Mammary epithelial cell (primary cell): ENCODE measurements at regions of chr20 and their contacts with region 1.

Region 1: GRCh38 chr20:4592316-4593148 is 129.2 kb upstream of the PRND start:
- DNase-seq: peak; percentile 22
- H3K4me3 ChIP-seq: peak overlapping the region in 2 of 3 experiments; percentile 26 to 27
- H3K27ac ChIP-seq: no peak overlapping the region
- H3K4me1 ChIP-seq: peaks cover 7% of the 10 kb centered on the region
- H3K27me3 ChIP-seq: no peaks in the 10 kb centered on the region
- CTCF ChIP-seq: peak; percentile 82 to 83

Region 2: GRCh38 chr20:4108495-4109306 is 483.8 kb before region 1 on chr20:
- CTCF ChIA-PET with region 1: no interaction called
- dilution Hi-C with region 1: no loop called
- in situ Hi-C with region 1: loop called in 1 of 2 experiments (anchors 10 kb)
- intact Hi-C with region 1: loop called (anchors 1 kb)
- DNase-seq: peak; percentile 60
- H3K4me3 ChIP-seq: no peak overlapping the region
- H3K27ac ChIP-seq: no peak overlapping the region
- H3K4me1 ChIP-seq: peaks cover 9% of the 10 kb centered on the region
- H3K27me3 ChIP-seq: no peaks in the 10 kb centered on the region
- CTCF ChIP-seq: peak; percentile 99 to 100

Region 3: GRCh38 chr20:4252005-4252404 is 340.5 kb before region 1 on chr20:
- CTCF ChIA-PET with region 1: no interaction called
- dilution Hi-C with region 1: no loop called
- in situ Hi-C with region 1: loop called in 1 of 2 experiments (anchors 5 kb)
- intact Hi-C with region 1: no loop called
- DNase-seq: no peak
- H3K4me3 ChIP-seq: no peak overlapping the region
- H3K27ac ChIP-seq: no peak overlapping the region
- H3K4me1 ChIP-seq: peaks cover 3% of the 10 kb centered on the region
- H3K27me3 ChIP-seq: no peaks in the 10 kb centered on the region
- CTCF ChIP-seq: no peak

Region 4: GRCh38 chr20:4435225-4435624 is 157.3 kb before region 1 on chr20:
- CTCF ChIA-PET with region 1: no interaction called
- dilution Hi-C with region 1: no loop called
- in situ Hi-C with region 1: no loop called
- intact Hi-C with region 1: no loop called
- DNase-seq: no peak
- H3K4me3 ChIP-seq: no peak overlapping the region
- H3K27ac ChIP-seq: no peak overlapping the region
- H3K4me1 ChIP-seq: peaks cover 15% of the 10 kb centered on the region
- H3K27me3 ChIP-seq: no peaks in the 10 kb centered on the region
- CTCF ChIP-seq: no peak

Region 5: GRCh38 chr20:4449957-4450715 is 142.4 kb before region 1 on chr20:
- CTCF ChIA-PET with region 1: no interaction called
- dilution Hi-C with region 1: no loop called
- in situ Hi-C with region 1: no loop called
- intact Hi-C with region 1: loop called (anchors 5 kb)
- DNase-seq: peak; percentile 72
- H3K4me3 ChIP-seq: peak overlapping the region in 1 of 3 experiments; percentile 2
- H3K27ac ChIP-seq: peak overlapping the region; percentile 9
- H3K4me1 ChIP-seq: peaks cover 40% of the 10 kb centered on the region
- H3K27me3 ChIP-seq: no peaks in the 10 kb centered on the region
- CTCF ChIP-seq: peak; percentile 41 to 49

Region 6: DNA sequence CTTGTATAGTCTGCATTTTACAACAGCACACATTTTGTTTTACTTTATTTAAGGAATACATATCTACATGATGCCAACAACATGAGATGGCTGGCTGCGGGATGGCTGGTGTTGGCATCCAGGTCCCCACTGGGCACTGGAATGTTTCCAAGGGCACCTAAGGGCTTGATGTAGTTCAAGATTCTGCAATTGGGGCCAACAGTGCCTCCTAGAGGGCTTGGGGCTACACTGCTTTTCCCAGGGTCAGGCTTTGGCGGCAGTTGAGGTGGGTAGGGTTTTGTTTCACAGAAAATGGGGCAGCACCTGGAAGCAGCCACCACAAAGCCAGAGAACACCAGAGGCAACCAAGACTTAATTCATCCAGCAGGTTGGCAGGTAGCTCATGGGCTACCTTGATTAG is 73.0 kb before region 1 on chr20:
- CTCF ChIA-PET with region 1: no interaction called
- dilution Hi-C with region 1: loop called (anchors 10 kb)
- in situ Hi-C with region 1: no loop called
- intact Hi-C with region 1: loop called (anchors 5 kb)
- DNase-seq: peak; percentile 11
- H3K4me3 ChIP-seq: no peak overlapping the region
- H3K27ac ChIP-seq: no peak overlapping the region
- H3K4me1 ChIP-seq: peaks cover 4% of the 10 kb centered on the region
- H3K27me3 ChIP-seq: no peaks in the 10 kb centered on the region
- CTCF ChIP-seq: peak; percentile 66 to 68

Region 7: DNA sequence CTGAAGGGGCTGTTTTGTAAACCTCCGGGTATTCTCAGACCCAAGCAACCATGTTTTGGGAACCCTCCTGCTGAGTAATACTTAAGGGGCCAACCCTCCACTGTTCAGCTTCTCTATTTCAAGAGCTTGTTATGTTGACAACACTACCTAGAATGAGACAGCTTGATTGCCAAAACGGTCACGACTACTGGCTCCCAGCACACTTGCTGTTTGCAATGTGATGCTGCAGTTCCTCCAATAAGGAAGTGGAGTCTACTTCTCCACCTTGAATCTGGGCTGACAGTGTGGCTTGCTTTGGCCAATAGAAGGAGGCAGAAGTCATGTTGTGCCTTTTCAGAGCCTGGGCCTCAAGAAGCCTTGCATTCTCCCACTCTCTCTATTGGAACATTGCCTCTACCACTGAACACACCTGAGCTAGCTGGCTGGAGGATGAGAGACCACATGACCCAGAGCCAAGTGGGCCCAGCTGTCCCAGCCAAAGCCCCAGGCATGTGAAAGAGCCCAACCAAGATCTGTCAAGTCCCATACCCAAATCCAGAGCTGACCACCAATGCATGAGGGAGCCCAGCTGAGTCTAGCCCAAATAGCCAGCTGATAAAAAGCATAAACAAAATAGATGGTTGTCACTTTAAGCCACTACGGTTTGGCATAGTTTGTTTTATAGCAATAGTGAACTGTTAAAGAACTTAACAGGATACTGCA is 237.1 kb after region 1 on chr20:
- CTCF ChIA-PET with region 1: no interaction called
- dilution Hi-C with region 1: no loop called
- in situ Hi-C with region 1: no loop called
- intact Hi-C with region 1: no loop called
- DNase-seq: no peak
- H3K4me3 ChIP-seq: no peak overlapping the region
- H3K27ac ChIP-seq: no peak overlapping the region
- H3K4me1 ChIP-seq: no peaks in the 10 kb centered on the region
- H3K27me3 ChIP-seq: no peaks in the 10 kb centered on the region
- CTCF ChIP-seq: no peak